ENCODE measurements at regions of chr10 and their contacts with region 1.

Region 1: DNA sequence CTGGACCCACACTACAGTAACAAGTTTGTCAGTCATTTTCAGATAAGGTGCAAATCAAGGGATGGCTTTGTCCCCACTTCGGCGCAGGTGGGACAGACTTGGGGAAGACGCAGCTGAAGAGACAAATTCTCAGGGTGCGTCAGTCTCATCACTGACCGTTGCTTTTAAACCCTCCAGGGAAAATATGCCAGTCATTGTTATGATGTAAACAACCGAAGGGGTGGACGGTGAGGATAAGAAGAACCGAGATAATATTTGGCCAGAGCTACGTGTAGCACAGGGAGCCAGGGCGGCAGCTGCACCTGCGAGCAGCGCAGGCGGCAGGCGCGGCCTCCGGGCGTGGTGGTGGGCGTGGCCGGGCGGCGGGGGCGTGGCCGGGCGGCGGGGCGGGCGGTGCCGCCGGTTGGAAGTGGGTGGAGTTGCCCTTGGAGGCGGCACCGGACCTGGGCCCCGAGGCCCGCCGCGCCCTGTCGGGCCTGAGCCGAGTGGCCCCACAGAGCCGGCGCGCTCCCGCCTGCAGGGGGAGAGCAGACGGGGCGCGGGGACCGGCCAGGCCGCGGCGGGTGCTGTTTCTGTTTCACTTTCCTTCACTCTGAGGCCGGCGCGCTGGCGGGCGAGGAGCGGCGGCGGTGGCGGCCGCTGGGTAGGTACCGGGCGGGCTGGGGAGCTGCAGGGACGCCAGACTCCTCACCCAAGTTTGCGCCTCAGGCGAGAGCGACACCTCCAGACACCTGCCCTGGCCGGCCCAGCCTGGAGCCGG is at the start of gene PCGF5:
- DNase-seq: peak; percentile 89
- H3K4me3 Mint-ChIP-seq: peak within 1 kb of the TSS; percentile 80
- H3K27ac Mint-ChIP-seq: peak within 1 kb of the TSS; percentile 22
- H3K4me1 Mint-ChIP-seq: peaks cover 33% of the 10 kb centered on the region
- H3K27me3 Mint-ChIP-seq: no peaks in the 10 kb centered on the region
- total RNA-seq, gene PCGF5: 34.2 to 36.4 TPM

Region 2: DNA sequence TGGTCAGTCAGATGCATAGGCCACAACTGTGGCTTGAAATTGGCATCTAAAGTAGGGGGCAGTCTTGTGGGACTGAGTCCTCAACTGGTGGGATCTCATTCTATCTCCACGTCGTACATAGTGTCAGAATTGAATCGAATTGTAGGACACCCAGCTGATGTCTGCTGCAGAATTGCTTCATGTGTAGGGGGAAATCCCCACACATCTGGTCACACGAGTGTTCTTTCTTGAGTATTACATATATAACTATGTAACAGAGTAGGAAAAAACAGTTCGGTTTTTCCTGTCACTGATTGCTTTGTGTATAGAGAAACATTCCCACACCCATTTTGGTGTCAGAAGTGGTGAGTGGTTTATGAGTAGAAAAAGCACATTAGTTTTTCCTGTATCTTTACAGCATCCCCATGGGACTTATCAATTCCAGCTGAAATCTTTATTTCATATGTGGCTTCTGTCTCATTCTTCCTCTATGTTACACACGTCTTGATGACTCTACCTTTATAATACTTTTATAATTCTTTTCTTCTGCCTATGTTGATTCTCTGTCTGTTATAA is 79.3 kb before region 1 on chr10:
- CTCF ChIA-PET with region 1: no interaction called
- intact Hi-C with region 1: no loop called
- DNase-seq: no peak
- H3K4me3 Mint-ChIP-seq: no peak overlapping the region
- H3K27ac Mint-ChIP-seq: no peak overlapping the region
- H3K4me1 Mint-ChIP-seq: peaks cover 9% of the 10 kb centered on the region
- H3K27me3 Mint-ChIP-seq: peaks cover 10% of the 10 kb centered on the region

Region 3: DNA sequence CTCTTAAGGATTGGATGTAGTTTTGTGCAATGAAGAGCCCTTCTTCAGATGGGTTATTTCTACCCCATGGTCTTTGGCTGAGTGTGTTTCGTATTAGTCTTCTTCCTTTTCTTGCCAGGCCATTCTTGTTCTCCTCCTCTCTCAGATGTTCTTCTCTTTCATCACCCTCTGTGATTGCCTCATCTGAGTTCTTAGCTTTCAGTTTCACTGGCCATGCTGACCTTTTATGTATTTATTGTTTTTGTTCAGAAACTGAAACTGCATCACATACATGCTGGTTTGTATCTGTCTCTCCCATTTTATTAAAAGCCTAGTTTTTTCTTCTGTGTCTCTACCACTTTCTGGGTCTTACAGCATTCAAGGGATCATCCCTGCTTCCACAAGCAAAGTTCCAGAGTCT is 21.6 kb before region 1 on chr10:
- CTCF ChIA-PET with region 1: no interaction called
- intact Hi-C with region 1: loop called (anchors 1 kb)
- DNase-seq: peak; percentile 37
- H3K4me3 Mint-ChIP-seq: no peak overlapping the region
- H3K27ac Mint-ChIP-seq: peak overlapping the region; percentile 13
- H3K4me1 Mint-ChIP-seq: peaks cover 77% of the 10 kb centered on the region
- H3K27me3 Mint-ChIP-seq: no peaks in the 10 kb centered on the region

Region 4: GRCh38 chr10:91923371-91924211 is 703.2 kb after region 1 on chr10 and contains the start of gene BTAF1:
- CTCF ChIA-PET with region 1: no interaction called
- intact Hi-C with region 1: loop called (anchors 2 kb)
- DNase-seq: peak; percentile 93
- H3K4me3 Mint-ChIP-seq: peak within 1 kb of the TSS; percentile 86
- H3K27ac Mint-ChIP-seq: peak within 1 kb of the TSS; percentile 99
- H3K4me1 Mint-ChIP-seq: peaks cover 35% of the 10 kb centered on the region
- H3K27me3 Mint-ChIP-seq: no peaks in the 10 kb centered on the region
- total RNA-seq, gene BTAF1: 42.6 to 43.6 TPM

Measured in activated naive CD4-positive, alpha-beta T cell treated with anti-CD3 and anti-CD28 coated beads for 36 hours (primary cell).